B cell (primary cell): ENCODE measurements at regions of chr15 and their contacts with region 1.

Region 1: GRCh38 chr15:45402162-45402954 is 24.0 kb upstream of the GATM start:
- DNase-seq: peak; percentile 98
- ATAC-seq: peak; percentile 91
- H3K4me3 ChIP-seq: peak overlapping the region; percentile 62 to 89 (median 86)
- H3K4me3 Mint-ChIP-seq: peak overlapping the region; percentile 96
- H3K27ac ChIP-seq: peak overlapping the region; percentile 88 to 95
- H3K27ac Mint-ChIP-seq: peak overlapping the region; percentile 97
- H3K4me1 ChIP-seq: peaks cover 22% of the 10 kb centered on the region in 2 donors
- H3K4me1 Mint-ChIP-seq: peaks cover 37% of the 10 kb centered on the region
- H3K27me3 ChIP-seq: no peaks in the 10 kb centered on the region
- H3K27me3 Mint-ChIP-seq: no peaks in the 10 kb centered on the region
- CTCF ChIP-seq: no peak

Region 2: DNA sequence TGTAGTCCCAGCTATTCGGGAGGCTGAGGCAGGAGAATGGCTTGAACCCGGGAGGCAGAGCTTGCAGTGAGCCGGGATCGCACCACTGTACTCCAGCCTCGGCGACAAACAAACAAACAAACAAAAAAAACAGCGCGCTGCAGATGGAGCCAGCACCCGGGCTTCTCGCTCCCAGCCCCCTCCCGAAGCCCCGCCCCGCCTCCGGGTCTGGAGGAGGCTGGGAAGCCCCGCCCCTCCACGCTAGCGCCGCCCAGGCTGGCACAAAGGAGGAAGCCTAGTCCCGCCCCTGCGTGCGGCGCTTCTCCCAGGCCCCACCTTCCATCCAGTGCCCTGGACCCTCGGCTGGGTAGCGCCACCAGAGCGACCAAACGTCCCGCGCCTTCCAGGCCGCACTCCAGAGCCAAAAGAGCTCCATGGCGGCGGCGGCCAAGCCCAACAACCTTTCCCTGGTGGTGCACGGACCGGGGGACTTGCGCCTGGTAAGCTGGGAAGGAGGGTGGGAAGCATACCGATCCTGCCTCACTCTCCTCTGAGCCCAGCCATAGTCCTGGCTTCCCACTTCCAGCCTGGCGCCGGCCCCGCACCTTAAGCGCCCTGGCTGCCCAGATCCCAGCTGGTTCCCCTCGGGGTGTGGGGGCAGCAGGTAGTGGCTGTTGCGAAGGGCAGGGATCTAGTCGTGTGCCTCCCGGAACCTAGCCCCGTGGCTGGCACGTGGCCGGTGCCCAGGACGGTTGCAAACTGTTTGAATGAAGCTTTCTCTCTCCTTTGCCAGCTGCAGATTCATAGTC is 379.3 kb before region 1 on chr15 and contains the start of gene SORD:
- CTCF ChIA-PET with region 1: no interaction called
- POLR2A ChIA-PET with region 1: no interaction called
- intact Hi-C with region 1: loop called (anchors 10 kb)
- DNase-seq: peak; percentile 89
- ATAC-seq: peak; percentile 100
- H3K4me3 ChIP-seq: peak within 1 kb of the TSS; percentile 51 to 92 (median 90)
- H3K4me3 Mint-ChIP-seq: peak within 1 kb of the TSS; percentile 92
- H3K27ac ChIP-seq: peak within 1 kb of the TSS; percentile 50 to 72
- H3K27ac Mint-ChIP-seq: peak within 1 kb of the TSS; percentile 78
- H3K4me1 ChIP-seq: peaks cover 12 to 16% of the 10 kb centered on the region in 2 donors
- H3K4me1 Mint-ChIP-seq: peaks cover 28% of the 10 kb centered on the region
- H3K27me3 ChIP-seq: no peaks in the 10 kb centered on the region
- H3K27me3 Mint-ChIP-seq: peaks cover 18% of the 10 kb centered on the region
- CTCF ChIP-seq: no peak
- total RNA-seq, gene SORD: 24.3 and 25.8 TPM in 2 replicates

Region 3: GRCh38 chr15:45179221-45179985 is 223.0 kb before region 1 on chr15:
- CTCF ChIA-PET with region 1: interaction called, 11 read pairs
- POLR2A ChIA-PET with region 1: no interaction called
- intact Hi-C with region 1: no loop called
- DNase-seq: peak; percentile 60
- ATAC-seq: peak; percentile 51
- H3K4me3 ChIP-seq: no peak overlapping the region
- H3K4me3 Mint-ChIP-seq: no peak overlapping the region
- H3K27ac ChIP-seq: no peak overlapping the region
- H3K27ac Mint-ChIP-seq: no peak overlapping the region
- H3K4me1 ChIP-seq: no peaks in the 10 kb centered on the region
- H3K4me1 Mint-ChIP-seq: peaks cover 2% of the 10 kb centered on the region
- H3K27me3 ChIP-seq: no peaks in the 10 kb centered on the region
- H3K27me3 Mint-ChIP-seq: peaks cover 7% of the 10 kb centered on the region
- CTCF ChIP-seq: peak; percentile 54

Region 4: DNA sequence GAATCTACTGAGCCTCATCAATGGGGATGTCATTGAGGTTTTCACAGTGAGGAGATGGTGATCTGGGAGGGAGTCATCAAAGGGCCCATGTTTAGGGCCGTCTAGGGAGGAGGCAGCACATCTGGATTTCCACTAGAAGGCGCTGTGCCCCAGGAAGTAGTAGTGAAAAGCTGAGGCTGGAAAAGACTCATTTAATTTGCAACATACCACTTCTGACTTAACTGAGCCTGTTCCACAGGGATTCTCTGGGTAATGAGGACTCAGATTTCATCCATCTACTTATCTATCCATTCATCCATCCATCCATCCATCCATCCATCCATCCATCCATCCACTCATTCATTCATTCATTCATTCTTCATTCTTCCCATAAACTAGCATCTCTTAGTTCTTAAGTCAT is 197.2 kb before region 1 on chr15:
- CTCF ChIA-PET with region 1: interaction called, 32 read pairs
- POLR2A ChIA-PET with region 1: interaction called, 24 read pairs
- intact Hi-C with region 1: loop called (anchors 1 kb)
- DNase-seq: peak; percentile 61
- ATAC-seq: no peak
- H3K4me3 ChIP-seq: no peak overlapping the region
- H3K4me3 Mint-ChIP-seq: no peak overlapping the region
- H3K27ac ChIP-seq: no peak overlapping the region
- H3K27ac Mint-ChIP-seq: no peak overlapping the region
- H3K4me1 ChIP-seq: peaks cover 6 to 8% of the 10 kb centered on the region in 2 donors
- H3K4me1 Mint-ChIP-seq: no peaks in the 10 kb centered on the region
- H3K27me3 ChIP-seq: peaks cover 0 to 3% (median 0%) of the 10 kb centered on the region in 4 experiments
- H3K27me3 Mint-ChIP-seq: peaks cover 24% of the 10 kb centered on the region
- CTCF ChIP-seq: peak; percentile 67

Region 5: GRCh38 chr15:45372041-45372995 is 30.0 kb before region 1 on chr15:
- CTCF ChIA-PET with region 1: interaction called, 10 read pairs
- POLR2A ChIA-PET with region 1: no interaction called
- intact Hi-C with region 1: no loop called
- DNase-seq: no peak
- ATAC-seq: no peak
- H3K4me3 ChIP-seq: no peak overlapping the region
- H3K4me3 Mint-ChIP-seq: no peak overlapping the region
- H3K27ac ChIP-seq: no peak overlapping the region
- H3K27ac Mint-ChIP-seq: no peak overlapping the region
- H3K4me1 ChIP-seq: peaks cover 3 to 7% of the 10 kb centered on the region in 2 donors
- H3K4me1 Mint-ChIP-seq: peaks cover 17% of the 10 kb centered on the region
- H3K27me3 ChIP-seq: peaks cover 0 to 3% (median under 1%) of the 10 kb centered on the region in 4 experiments
- H3K27me3 Mint-ChIP-seq: peaks cover 2% of the 10 kb centered on the region
- CTCF ChIP-seq: no peak

Region 6: GRCh38 chr15:45391746-45392583 is 10.4 kb before region 1 on chr15:
- CTCF ChIA-PET with region 1: interaction called, 45 read pairs
- POLR2A ChIA-PET with region 1: interaction called, 7 read pairs
- intact Hi-C with region 1: loop called (anchors 1 kb)
- DNase-seq: peak; percentile 88
- ATAC-seq: peak; percentile 90
- H3K4me3 ChIP-seq: peak overlapping the region in 2 of 5 experiments; percentile 23 to 29
- H3K4me3 Mint-ChIP-seq: peak overlapping the region; percentile 73
- H3K27ac ChIP-seq: peak overlapping the region; percentile 85 to 86
- H3K27ac Mint-ChIP-seq: peak overlapping the region; percentile 95
- H3K4me1 ChIP-seq: peaks cover 19% of the 10 kb centered on the region in 2 donors
- H3K4me1 Mint-ChIP-seq: peaks cover 20% of the 10 kb centered on the region
- H3K27me3 ChIP-seq: no peaks in the 10 kb centered on the region
- H3K27me3 Mint-ChIP-seq: peaks cover 2% of the 10 kb centered on the region
- CTCF ChIP-seq: no peak

Region 7: DNA sequence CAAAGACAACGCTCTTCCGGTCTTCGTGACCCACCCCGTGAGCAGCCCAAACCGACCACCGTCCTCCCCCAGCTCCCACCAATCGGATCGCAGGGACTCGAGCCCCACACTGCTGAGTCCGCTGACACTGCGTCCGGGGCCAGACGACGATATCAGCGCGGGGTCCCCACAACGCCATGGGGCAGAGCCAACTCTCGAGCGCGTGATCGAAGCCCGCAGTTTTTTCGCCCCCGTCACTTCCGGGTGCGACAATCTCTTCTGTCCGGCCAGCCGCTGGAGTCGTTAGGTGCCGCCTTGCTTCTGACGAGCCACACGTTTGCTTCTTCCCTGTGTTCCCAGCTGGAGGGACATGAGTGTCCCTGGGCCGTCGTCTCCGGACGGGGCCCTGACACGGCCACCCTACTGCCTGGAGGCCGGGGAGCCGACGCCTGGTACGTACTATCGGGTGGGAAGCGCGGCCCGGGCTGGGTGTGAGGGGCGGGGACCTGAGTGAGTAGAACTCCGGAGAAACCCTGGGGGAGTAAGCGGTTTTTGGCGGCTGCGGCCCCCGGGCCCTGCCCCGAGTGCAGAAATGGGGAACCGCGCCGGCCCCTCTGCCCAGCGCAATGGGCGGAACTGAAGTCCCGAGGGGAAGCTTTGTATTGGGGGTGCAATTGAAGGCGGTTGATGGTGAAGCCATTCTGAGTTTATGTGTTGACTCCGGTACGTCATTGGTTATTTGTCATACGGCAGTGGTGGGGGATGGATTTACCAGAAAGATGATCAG is 184.9 kb after region 1 on chr15 and contains the start of gene BLOC1S6:
- CTCF ChIA-PET with region 1: interaction called, 6 read pairs
- POLR2A ChIA-PET with region 1: interaction called, 3 read pairs
- intact Hi-C with region 1: loop called (anchors 2 kb)
- DNase-seq: peak; percentile 99
- ATAC-seq: peak; percentile 86
- H3K4me3 ChIP-seq: peak within 1 kb of the TSS; percentile 64 to 98 (median 89)
- H3K4me3 Mint-ChIP-seq: peak within 1 kb of the TSS; percentile 100
- H3K27ac ChIP-seq: peak within 1 kb of the TSS; percentile 98 to 99
- H3K27ac Mint-ChIP-seq: peak within 1 kb of the TSS; percentile 100
- H3K4me1 ChIP-seq: peaks cover 22 to 29% of the 10 kb centered on the region in 2 donors
- H3K4me1 Mint-ChIP-seq: peaks cover 46% of the 10 kb centered on the region
- H3K27me3 ChIP-seq: no peaks in the 10 kb centered on the region
- H3K27me3 Mint-ChIP-seq: no peaks in the 10 kb centered on the region
- CTCF ChIP-seq: no peak
- total RNA-seq, gene BLOC1S6: 51.3 and 60.8 TPM in 2 replicates